ENCODE measurements at regions of chr1 and their contacts with region 1.

Region 1: GRCh38 chr1:243287652-243288051 is 31.8 kb downstream of the SDCCAG8 start:
- DNase-seq: peak; percentile 93 to 98 (median 96)
- H3K4me3 ChIP-seq: peak overlapping the region in 1 of 3 experiments; percentile 54
- H3K4me3 Mint-ChIP-seq: peak overlapping the region; percentile 20 to 83
- H3K27ac ChIP-seq: peak overlapping the region; percentile 96 to 98
- H3K27ac Mint-ChIP-seq: peak overlapping the region; percentile 98 to 100 (median 99)
- H3K4me1 ChIP-seq: peaks cover 47 to 53% of the 10 kb centered on the region in 2 donors
- H3K4me1 Mint-ChIP-seq: peaks cover 54% of the 10 kb centered on the region
- H3K27me3 ChIP-seq: no peaks in the 10 kb centered on the region
- H3K27me3 Mint-ChIP-seq: no peaks in the 10 kb centered on the region
- CTCF ChIP-seq: no peak

Region 2: DNA sequence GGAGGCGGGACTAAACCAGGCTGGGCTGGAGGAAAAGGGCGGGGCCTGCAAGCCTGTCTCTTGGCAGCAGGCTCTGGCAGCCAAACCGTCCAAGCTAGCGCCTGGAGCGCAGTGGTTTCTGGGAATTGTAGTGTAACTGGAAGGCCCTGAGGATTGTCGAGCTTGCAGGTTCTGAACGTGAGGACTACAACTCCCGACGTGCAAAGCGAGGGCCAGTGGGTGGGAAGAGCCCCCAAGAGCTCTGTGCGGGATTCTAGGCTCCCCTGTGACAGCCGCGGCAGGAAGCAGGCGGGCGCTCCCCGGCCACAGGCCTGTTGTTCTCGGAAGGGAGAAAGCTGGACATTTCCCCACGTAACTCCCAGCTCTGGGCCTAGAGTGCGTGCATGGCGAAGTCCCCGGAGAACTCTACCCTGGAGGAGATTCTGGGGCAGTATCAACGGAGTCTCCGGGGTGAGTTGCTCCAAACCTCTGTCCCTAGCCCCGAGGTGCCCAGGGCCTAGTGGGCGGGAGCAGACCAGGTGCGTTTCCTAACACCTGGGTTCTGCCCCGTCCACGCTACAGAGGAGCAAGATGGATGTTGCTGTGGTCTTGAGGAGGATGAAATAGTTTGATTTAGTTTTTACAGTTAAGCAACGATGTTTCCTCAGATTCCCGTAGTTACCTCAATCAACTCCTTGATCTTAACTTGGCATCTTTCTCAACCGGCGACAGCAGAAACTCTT is 31.7 kb before region 1 on chr1 and contains the start of gene SDCCAG8:
- intact Hi-C with region 1: loop called in 1 of 2 experiments (anchors 5 kb)
- DNase-seq: peak; percentile 97 to 99 (median 97)
- H3K4me3 ChIP-seq: peak within 1 kb of the TSS; percentile 61 to 96 (median 74)
- H3K4me3 Mint-ChIP-seq: peak within 1 kb of the TSS; percentile 97 to 99
- H3K27ac ChIP-seq: peak within 1 kb of the TSS; percentile 95 to 99
- H3K27ac Mint-ChIP-seq: peak within 1 kb of the TSS; percentile 99 to 100 (median 99)
- H3K4me1 ChIP-seq: peaks cover 31 to 56% of the 10 kb centered on the region in 2 donors
- H3K4me1 Mint-ChIP-seq: peaks cover 44% of the 10 kb centered on the region
- H3K27me3 ChIP-seq: no peaks in the 10 kb centered on the region
- H3K27me3 Mint-ChIP-seq: no peaks in the 10 kb centered on the region
- CTCF ChIP-seq: no peak
- polyA plus RNA-seq, gene SDCCAG8: 33.2 to 34.4 (median 33.4) TPM

Region 3: GRCh38 chr1:243264717-243265116 is 22.9 kb before region 1 on chr1:
- intact Hi-C with region 1: loop called in 1 of 2 experiments (anchors 2 kb)
- DNase-seq: peak; percentile 67 to 93 (median 90)
- H3K4me3 ChIP-seq: peak overlapping the region in 1 of 3 experiments; percentile 56
- H3K4me3 Mint-ChIP-seq: peak overlapping the region; percentile 37 to 56
- H3K27ac ChIP-seq: peak overlapping the region; percentile 74 to 87
- H3K27ac Mint-ChIP-seq: peak overlapping the region; percentile 90 to 97 (median 95)
- H3K4me1 ChIP-seq: peaks cover 78 to 83% of the 10 kb centered on the region in 2 donors
- H3K4me1 Mint-ChIP-seq: peaks cover 73% of the 10 kb centered on the region
- H3K27me3 ChIP-seq: no peaks in the 10 kb centered on the region
- H3K27me3 Mint-ChIP-seq: no peaks in the 10 kb centered on the region
- CTCF ChIP-seq: no peak

Region 4: DNA sequence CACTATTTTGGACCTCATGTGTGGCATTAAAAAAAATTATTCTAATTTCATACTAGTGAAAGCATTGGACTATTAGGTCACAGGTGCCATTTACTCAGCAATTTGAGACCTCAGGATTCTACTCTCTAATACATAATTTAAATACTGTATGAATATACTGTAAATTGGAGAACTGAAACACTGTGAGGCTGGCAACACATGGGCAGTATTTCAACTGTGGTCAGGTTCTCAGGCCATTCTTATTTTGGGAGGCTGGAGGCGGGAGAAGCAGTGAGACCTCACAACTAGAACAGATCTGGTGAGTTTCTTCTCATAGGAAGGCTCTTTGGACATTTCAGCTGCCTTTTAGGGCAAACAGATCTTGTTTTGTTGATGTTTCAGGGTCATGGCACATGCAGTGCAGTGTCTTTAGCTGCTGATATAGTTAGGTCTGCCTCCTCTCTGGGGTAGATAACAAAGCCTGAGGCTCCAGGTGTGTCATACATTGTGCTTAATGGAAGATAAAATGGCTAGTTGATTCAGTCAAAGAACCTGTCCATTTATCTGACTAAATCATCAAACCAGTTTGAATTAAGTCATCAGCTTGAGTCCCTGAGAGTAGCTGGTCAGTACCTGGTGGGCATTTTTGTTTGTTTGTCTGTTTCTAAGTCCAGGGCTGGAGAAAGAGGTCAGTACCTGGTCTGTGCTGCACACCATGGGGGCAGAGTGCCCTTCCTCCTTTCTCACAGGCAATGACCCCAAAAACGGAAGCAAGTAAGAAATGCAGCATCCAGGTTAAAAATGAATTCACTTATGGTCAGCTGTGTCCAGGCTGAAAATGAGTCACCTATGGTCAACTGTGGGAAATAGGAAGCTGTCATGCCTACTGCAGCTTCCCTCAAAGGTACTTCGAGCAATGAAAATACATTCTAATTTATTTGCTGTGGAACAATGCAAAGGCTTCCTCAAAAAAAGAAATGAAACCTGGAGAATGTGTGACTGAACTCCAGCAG is 184.4 kb after region 1 on chr1:
- intact Hi-C with region 1: loop called in 1 of 2 experiments (anchors 10 kb)
- DNase-seq: peak; percentile 62 to 86 (median 80)
- H3K4me3 ChIP-seq: peak overlapping the region in 1 of 3 experiments; percentile 57
- H3K4me3 Mint-ChIP-seq: peak overlapping the region in 1 of 2 donors; percentile 72
- H3K27ac ChIP-seq: peak overlapping the region; percentile 72 to 80
- H3K27ac Mint-ChIP-seq: peak overlapping the region; percentile 85 to 93 (median 92)
- H3K4me1 ChIP-seq: peaks cover 42 to 53% of the 10 kb centered on the region in 2 donors
- H3K4me1 Mint-ChIP-seq: peaks cover 52% of the 10 kb centered on the region
- H3K27me3 ChIP-seq: no peaks in the 10 kb centered on the region
- H3K27me3 Mint-ChIP-seq: peaks cover 0 to 10% (median 0%) of the 10 kb centered on the region in 3 donors
- CTCF ChIP-seq: no peak